ENCODE measurements at regions of chr11 and their contacts with region 1.

Region 1: GRCh38 chr11:18775492-18776292 is 15.9 kb downstream of the PTPN5 start:
- DNase-seq: peak; percentile 79 to 85
- H3K4me3 ChIP-seq: no peak overlapping the region
- H3K4me3 Mint-ChIP-seq: no peak overlapping the region
- H3K27ac Mint-ChIP-seq: no peak overlapping the region
- H3K4me1 ChIP-seq: no peaks in the 10 kb centered on the region
- H3K4me1 Mint-ChIP-seq: peaks cover 6% of the 10 kb centered on the region
- H3K27me3 ChIP-seq: no peaks in the 10 kb centered on the region
- H3K27me3 Mint-ChIP-seq: peaks cover 2% of the 10 kb centered on the region
- CTCF ChIP-seq: peak; percentile 89

Region 2: DNA sequence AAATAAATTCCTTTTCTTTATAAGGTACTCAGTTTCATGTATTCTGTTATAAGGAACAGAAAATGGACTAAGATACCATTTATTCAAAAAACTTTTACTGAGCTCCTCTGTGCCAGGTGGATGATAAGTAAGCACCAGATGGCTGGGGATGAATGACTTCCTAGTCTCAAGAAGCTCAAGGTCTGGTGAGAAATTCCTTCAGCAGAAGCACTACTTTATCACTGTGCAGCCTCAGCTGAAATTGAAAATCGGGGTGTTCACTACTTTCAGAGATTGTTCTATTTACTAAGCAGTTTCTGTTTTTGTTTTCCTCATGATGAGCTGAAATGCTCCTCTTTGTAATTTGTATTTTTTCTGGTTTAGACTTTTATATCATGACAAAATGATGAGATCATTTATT is 312.3 kb before region 1 on chr11:
- CTCF ChIA-PET with region 1: no interaction called
- POLR2A ChIA-PET with region 1: no interaction called
- intact Hi-C with region 1: no loop called
- DNase-seq: no peak
- H3K4me3 ChIP-seq: no peak overlapping the region
- H3K4me3 Mint-ChIP-seq: no peak overlapping the region
- H3K27ac Mint-ChIP-seq: no peak overlapping the region
- H3K4me1 ChIP-seq: peaks cover 12% of the 10 kb centered on the region
- H3K4me1 Mint-ChIP-seq: peaks cover 3% of the 10 kb centered on the region
- H3K27me3 ChIP-seq: no peaks in the 10 kb centered on the region
- H3K27me3 Mint-ChIP-seq: no peaks in the 10 kb centered on the region
- CTCF ChIP-seq: no peak

Region 3: DNA sequence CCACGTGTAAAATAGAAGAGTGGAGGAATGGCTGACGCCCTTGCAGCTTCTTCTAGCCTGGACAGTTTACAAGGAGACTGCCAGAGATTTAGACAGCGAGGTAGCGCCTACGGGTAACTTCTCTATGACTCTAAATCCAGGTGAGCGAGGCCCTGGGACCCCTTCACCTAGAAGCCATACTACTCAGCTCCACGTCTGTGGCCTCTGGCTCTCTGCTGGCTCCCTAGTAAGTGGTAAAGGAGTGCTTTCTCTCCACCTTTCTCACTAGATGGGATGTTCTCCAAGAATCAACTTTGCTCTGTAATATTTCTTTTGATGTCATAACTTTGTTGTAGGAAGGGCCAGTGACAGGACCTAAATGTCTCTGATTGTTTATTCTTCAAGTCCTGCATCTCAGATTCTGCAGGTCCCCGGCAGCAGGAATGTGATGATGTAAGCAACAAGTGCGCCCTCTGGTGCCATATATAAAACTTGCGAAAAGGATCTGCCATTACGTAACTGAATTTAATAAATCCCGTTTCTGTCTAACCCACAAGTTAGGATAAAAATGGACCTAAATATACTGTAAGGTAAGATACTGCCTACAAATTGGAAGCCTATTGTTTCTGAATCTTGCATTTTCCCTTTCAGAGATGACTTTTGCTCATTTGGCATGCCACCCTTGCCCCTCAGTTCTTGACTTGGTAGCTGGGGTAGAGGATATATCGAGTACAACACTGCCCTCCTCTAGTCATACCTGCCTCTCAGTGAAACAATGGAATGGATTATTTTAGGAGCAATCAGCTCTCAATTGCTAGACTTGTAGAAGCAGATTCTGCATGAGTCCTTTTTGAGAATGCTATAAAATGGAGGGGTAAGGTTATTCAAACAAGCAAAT is 26.9 kb after region 1 on chr11:
- CTCF ChIA-PET with region 1: interaction called, 3 read pairs
- POLR2A ChIA-PET with region 1: no interaction called
- intact Hi-C with region 1: loop called (anchors 1 kb)
- DNase-seq: peak; percentile 71 to 73
- H3K4me3 ChIP-seq: no peak overlapping the region
- H3K4me3 Mint-ChIP-seq: no peak overlapping the region
- H3K27ac Mint-ChIP-seq: no peak overlapping the region
- H3K4me1 ChIP-seq: no peaks in the 10 kb centered on the region; the same call in 1 of the 2 replicates
- H3K4me1 Mint-ChIP-seq: no peaks in the 10 kb centered on the region
- H3K27me3 ChIP-seq: no peaks in the 10 kb centered on the region
- H3K27me3 Mint-ChIP-seq: peaks cover 10% of the 10 kb centered on the region
- CTCF ChIP-seq: peak; percentile 61 to 75

Measured in Caco-2 (cell line).